HEK293 (cell line): ENCODE measurements at regions of chr10 and their contacts with region 1.

Region 1: GRCh38 chr10:93198401-93199131 is 124.9 kb downstream of the CYP26A1 start:
- H3K4me3 ChIP-seq: no peak overlapping the region
- H3K27ac ChIP-seq: no peak overlapping the region; the same call in 1 of the 2 replicates
- H3K4me1 ChIP-seq: 0 out of 2 replicates have a peak, but pooled peaks cover 5% of the 10 kb centered on the region
- CTCF ChIP-seq: no peak

Region 2: DNA sequence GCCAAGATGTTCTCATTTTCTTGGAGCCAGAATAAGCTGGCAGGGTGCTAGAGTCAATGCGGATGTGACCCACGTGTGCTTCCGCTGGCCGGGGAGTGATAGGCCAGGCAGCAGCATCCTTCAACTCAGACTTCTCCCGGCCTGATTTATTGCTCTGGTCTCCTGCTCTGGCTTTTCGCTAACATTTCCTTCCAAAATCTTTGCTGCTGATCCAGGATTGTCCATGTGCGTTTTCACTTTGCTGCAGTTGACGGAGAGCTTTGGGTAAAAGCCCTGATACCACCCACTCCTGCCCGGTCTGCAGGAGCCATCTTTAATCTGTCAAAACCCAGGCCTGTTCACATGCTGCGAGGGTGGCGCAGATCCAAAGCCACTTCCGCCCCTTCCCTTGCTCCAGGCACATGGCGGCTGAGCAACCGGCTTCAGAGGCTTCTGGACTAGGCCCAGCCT is 18.1 kb before region 1 on chr10:
- CTCF ChIA-PET with region 1: no interaction called
- POLR2A ChIA-PET with region 1: no interaction called
- H3K4me3 ChIP-seq: no peak overlapping the region
- H3K27ac ChIP-seq: no peak overlapping the region
- H3K4me1 ChIP-seq: no peaks in the 10 kb centered on the region
- CTCF ChIP-seq: no peak

Region 3: DNA sequence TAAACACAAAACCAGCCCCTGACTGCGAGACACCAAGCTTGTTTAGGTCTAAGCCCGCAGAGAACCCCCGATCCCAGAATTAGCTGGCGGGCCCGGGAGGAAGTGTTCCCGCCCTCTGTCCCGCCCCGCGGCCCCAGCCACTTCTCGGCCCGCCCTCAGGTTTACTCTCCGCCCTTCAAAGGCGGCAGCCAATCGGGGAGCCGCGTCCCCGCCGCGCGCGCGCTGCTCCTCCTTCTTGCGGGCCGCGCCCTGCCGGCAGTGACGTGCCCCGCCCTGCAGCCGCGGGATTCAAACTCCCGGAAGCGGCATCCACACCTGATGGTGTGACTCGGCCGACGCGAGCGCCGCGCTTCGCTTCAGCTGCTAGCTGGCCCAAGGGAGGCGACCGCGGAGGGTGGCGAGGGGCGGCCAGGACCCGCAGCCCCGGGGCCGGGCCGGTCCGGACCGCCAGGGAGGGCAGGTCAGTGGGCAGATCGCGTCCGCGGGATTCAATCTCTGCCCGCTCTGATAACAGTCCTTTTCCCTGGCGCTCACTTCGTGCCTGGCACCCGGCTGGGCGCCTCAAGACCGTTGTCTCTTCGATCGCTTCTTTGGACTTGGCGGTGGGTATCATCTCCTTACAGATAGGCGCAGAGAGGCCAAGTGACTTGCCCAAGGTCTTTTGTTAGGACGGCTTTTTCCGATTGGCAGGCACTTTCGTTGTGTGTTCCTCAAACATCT is 297.9 kb after region 1 on chr10 and contains the start of gene CEP55:
- CTCF ChIA-PET with region 1: no interaction called
- POLR2A ChIA-PET with region 1: interaction called, 11 read pairs
- H3K4me3 ChIP-seq: peak within 1 kb of the TSS; percentile 72
- H3K27ac ChIP-seq: peak within 1 kb of the TSS; percentile 87
- H3K4me1 ChIP-seq: no peaks in the 10 kb centered on the region; the same call in 1 of the 2 replicates
- CTCF ChIP-seq: 0 out of 2 replicates have a peak, but pooled peaks have one; percentile 14

Region 4: GRCh38 chr10:93667795-93668194 is 469.2 kb after region 1 on chr10:
- CTCF ChIA-PET with region 1: no interaction called
- POLR2A ChIA-PET with region 1: no interaction called
- H3K4me3 ChIP-seq: no peak overlapping the region
- H3K27ac ChIP-seq: no peak overlapping the region
- H3K4me1 ChIP-seq: no peaks in the 10 kb centered on the region
- CTCF ChIP-seq: no peak